HEK293T (cell line): ENCODE measurements at regions of chr17 and their contacts with region 1.

Region 1: DNA sequence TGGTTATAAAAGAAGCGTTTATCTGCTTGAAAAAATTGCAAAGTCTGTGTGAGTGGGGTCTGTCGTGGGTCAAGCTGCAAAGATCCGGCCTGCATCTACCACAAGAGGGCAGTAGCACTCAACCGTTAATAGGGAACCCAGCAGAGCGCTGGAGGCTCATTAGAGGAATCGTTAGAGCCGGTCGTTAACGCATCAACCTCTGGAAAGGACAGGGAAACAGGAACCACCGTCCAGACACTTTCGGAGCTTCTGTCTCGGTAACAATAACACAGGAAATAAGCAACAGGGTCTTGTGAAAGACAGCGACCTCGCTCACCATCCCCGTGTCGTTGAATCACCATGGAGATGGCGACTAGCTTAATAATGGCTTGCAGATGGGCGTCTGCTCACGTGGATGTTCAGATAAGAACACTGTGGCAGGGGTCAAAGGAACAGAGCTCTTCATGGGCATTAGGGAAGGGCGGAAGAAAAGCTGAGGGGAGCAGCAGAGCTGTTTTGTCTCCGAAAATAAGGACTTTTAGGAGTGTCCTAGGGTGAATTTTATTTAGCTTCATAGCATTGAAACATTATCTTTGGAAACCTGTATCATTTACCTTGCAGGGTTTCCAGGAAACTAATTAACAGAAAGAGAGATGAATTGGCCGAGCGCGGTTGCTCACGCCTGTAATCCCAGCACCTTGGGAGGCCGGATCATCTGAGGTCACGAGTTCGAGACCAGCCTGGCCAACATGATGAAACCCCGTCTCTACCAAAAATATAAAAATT is 11.9 kb upstream of the NSRP1 start:
- DNase-seq: peak; percentile 69

Region 2: GRCh38 chr17:30027676-30028075 is 77.1 kb before region 1 on chr17:
- CTCF ChIA-PET with region 1: no interaction called
- POLR2A ChIA-PET with region 1: no interaction called
- DNase-seq: no peak

Region 3: DNA sequence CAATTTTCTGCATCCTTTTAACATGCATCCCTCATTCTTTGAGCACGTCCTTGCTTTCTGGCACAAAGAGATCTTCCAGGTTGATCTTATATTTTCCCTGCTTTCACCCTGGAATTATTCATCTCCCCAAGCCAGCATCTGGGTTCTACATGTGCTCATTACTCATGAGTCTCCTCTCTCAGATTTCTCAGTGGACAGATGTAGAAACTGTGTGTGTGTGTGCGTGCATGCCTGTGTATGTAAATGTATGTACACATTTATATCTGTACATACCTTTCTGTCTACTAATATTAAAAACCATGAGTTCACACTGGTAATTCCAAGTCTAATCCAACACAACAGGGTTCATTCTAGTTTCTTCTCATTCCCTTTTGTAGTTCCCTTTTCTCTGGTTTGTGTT is 30.0 kb before region 1 on chr17:
- CTCF ChIA-PET with region 1: no interaction called
- POLR2A ChIA-PET with region 1: no interaction called
- DNase-seq: no peak

Region 4: DNA sequence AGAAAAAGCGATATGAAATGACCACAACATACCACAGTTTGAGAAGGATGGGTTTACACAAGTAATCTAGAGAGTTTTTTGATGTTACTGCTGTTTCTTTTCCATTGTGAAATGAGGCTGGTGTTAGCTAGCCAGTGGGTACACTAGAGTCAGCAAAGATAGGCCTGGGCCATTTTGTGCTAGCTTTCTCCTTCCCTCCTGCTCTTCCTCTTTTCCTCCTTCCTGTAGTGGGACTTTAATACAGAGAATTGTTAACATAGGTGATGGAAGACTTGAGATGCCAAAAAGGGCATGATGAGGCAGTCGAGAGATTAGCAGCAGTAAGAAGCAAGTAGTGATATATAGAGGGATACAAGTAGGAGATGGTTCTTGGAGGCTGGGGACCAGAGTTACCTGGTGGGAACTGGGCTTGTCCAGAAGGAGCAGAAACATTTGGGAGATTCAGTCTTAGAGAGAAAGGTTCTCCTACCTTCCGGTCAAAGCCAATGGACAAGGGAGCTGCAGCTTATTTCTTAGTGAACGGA is 19.6 kb after region 1 on chr17:
- CTCF ChIA-PET with region 1: interaction called, 13 read pairs
- POLR2A ChIA-PET with region 1: interaction called, 5 read pairs
- DNase-seq: no peak

Region 5: GRCh38 chr17:30336369-30337171 is 231.8 kb after region 1 on chr17:
- CTCF ChIA-PET with region 1: interaction called, 17 read pairs
- POLR2A ChIA-PET with region 1: interaction called, 5 read pairs
- DNase-seq: peak; percentile 49